H1 (cell line): ENCODE measurements at regions of chr12 and their contacts with region 1.

Region 1: GRCh38 chr12:8108808-8109398 is 14.5 kb upstream of the CLEC4A start:
- DNase-seq: peak; percentile 23 to 86
- H3K4me3 ChIP-seq: no peak overlapping the region
- H3K27ac ChIP-seq: no peak overlapping the region
- H3K4me1 ChIP-seq: no peaks in the 10 kb centered on the region
- H3K27me3 ChIP-seq: no peaks in the 10 kb centered on the region
- CTCF ChIP-seq: peak; percentile 15 to 99 (median 94)
- EP300 ChIP-seq: no peak
- POLR2A ChIP-seq: no peak
- RAD21 ChIP-seq: peak; percentile 99

Region 2: GRCh38 chr12:8120072-8120713 is 11.3 kb after region 1 on chr12:
- CTCF ChIA-PET with region 1: interaction called, 26 read pairs
- POLR2A ChIA-PET with region 1: no interaction called
- DNase-seq: no peak
- H3K4me3 ChIP-seq: no peak overlapping the region
- H3K27ac ChIP-seq: no peak overlapping the region
- H3K4me1 ChIP-seq: peaks cover 0 to 4% (median 3%) of the 10 kb centered on the region in 4 experiments; a peak in 2 of 7 replicates
- H3K27me3 ChIP-seq: no peaks in the 10 kb centered on the region
- CTCF ChIP-seq: no peak
- EP300 ChIP-seq: no peak
- POLR2A ChIP-seq: no peak
- RAD21 ChIP-seq: no peak

Region 3: DNA sequence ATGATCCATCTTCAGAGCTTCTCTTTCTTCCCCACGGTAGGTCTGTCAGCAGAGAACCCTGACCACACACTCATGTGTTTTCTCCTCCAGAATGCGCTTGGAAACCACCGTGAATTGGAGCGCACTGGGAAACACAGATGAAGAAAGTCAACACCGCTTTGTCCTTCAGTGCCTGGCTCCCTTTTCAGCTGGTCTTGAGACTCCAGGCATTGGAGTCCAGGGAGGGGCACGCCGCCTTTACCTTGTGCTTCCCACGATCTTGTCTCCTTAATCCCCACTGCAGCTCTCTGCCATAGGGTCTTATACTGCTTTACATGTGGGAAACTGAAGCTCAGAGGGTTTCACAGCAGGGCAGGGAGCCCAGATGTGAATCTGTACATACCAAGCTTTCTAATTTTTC is 117.5 kb after region 1 on chr12:
- CTCF ChIA-PET with region 1: interaction called, 46 read pairs
- POLR2A ChIA-PET with region 1: no interaction called
- DNase-seq: peak in 1 of 2 experiments; percentile 23
- H3K4me3 ChIP-seq: no peak overlapping the region
- H3K27ac ChIP-seq: no peak overlapping the region
- H3K4me1 ChIP-seq: peaks cover 0 to 2% (median 0%) of the 10 kb centered on the region in 4 experiments; a peak in 1 of 7 replicates
- H3K27me3 ChIP-seq: no peaks in the 10 kb centered on the region
- CTCF ChIP-seq: no peak
- EP300 ChIP-seq: no peak
- POLR2A ChIP-seq: no peak
- RAD21 ChIP-seq: no peak